HEK293 (cell line): ENCODE measurements at regions of chr7 and their contacts with region 1.

Region 1: DNA sequence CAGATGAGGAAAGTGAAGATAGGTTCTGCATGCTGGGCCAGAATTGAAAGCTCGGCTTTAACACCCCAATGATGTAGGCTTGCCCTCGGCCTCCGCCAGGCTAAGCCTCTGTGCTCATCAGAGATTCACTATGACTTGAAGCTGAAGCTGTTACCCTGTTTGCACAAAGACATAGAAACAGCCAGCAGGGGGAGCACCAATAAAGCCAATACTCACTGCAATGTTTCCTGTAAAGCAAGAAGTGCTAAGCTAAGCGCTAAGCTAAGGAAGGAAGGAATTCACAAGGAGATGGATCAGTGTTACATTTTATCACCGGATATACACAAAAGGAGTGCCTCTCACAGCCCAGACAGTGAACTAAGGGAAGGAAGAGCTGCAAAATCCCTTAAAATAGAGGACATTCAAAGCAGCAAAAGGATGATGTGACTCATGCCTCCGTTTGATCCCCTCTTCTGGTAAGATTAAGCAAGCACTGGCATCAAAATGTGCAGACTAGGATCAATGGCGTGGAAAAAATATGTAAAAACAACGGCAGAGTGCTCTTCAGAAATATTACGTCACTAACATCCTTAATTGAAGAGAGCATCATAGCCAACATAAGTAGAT is 153.8 kb downstream of the COBL start:
- H3K4me3 ChIP-seq: no peak overlapping the region
- H3K27ac ChIP-seq: no peak overlapping the region
- H3K4me1 ChIP-seq: no peaks in the 10 kb centered on the region
- CTCF ChIP-seq: peak; percentile 45; the same call in 1 of the 2 replicates

Region 2: GRCh38 chr7:50467817-50468610 is 694.8 kb before region 1 on chr7:
- CTCF ChIA-PET with region 1: interaction called, 64 read pairs
- POLR2A ChIA-PET with region 1: no interaction called
- H3K4me3 ChIP-seq: no peak overlapping the region
- H3K27ac ChIP-seq: no peak overlapping the region
- H3K4me1 ChIP-seq: peaks cover 2% of the 10 kb centered on the region; the same call in 1 of the 2 replicates
- CTCF ChIP-seq: peak; percentile 77

Region 3: DNA sequence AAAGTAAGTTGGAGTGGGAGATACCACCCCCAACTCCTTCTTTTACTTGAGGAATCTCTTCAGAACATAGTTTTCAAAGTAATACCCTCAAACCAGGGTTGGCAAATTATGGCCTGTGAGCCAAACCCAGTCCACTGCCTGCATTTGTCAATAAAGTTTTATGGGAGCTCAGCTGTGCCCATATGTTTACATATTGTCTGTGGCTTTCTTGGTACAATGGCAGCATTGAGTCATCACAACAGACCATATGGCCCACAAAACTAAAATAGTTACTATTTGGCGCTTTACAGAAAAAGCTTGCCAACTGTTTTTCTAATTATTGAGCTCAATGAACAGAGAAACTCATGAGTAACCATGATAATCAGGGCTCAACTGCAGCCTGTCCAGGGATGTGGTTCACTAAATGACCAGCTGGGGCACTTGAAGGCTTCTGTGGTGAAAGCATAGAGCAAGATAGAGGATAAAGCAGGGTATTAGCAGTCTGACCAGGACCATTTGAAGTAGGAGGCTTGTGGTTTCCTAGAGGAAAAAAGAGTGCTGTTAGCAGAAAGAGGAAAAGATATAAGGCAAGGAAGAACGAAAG is 184.1 kb before region 1 on chr7:
- CTCF ChIA-PET with region 1: no interaction called
- POLR2A ChIA-PET with region 1: no interaction called
- H3K4me3 ChIP-seq: no peak overlapping the region
- H3K27ac ChIP-seq: no peak overlapping the region
- H3K4me1 ChIP-seq: no peaks in the 10 kb centered on the region
- CTCF ChIP-seq: no peak

Region 4: GRCh38 chr7:51009704-51010496 is 152.9 kb before region 1 on chr7:
- CTCF ChIA-PET with region 1: no interaction called
- POLR2A ChIA-PET with region 1: no interaction called
- H3K4me3 ChIP-seq: no peak overlapping the region
- H3K27ac ChIP-seq: no peak overlapping the region
- H3K4me1 ChIP-seq: no peaks in the 10 kb centered on the region
- CTCF ChIP-seq: no peak

Region 5: GRCh38 chr7:51025668-51026067 is 137.2 kb before region 1 on chr7:
- CTCF ChIA-PET with region 1: no interaction called
- POLR2A ChIA-PET with region 1: no interaction called
- H3K4me3 ChIP-seq: no peak overlapping the region
- H3K27ac ChIP-seq: no peak overlapping the region
- H3K4me1 ChIP-seq: no peaks in the 10 kb centered on the region
- CTCF ChIP-seq: no peak

Region 6: GRCh38 chr7:51187941-51188340 is 25.1 kb after region 1 on chr7:
- CTCF ChIA-PET with region 1: interaction called, 15 read pairs
- POLR2A ChIA-PET with region 1: no interaction called
- H3K4me3 ChIP-seq: no peak overlapping the region
- H3K27ac ChIP-seq: no peak overlapping the region
- H3K4me1 ChIP-seq: no peaks in the 10 kb centered on the region
- CTCF ChIP-seq: peak; percentile 43; the same call in 1 of the 2 replicates

Region 7: GRCh38 chr7:51366930-51367613 is 204.2 kb after region 1 on chr7:
- CTCF ChIA-PET with region 1: interaction called, 277 read pairs
- POLR2A ChIA-PET with region 1: interaction called, 4 read pairs
- H3K4me3 ChIP-seq: no peak overlapping the region
- H3K27ac ChIP-seq: no peak overlapping the region
- H3K4me1 ChIP-seq: no peaks in the 10 kb centered on the region
- CTCF ChIP-seq: peak; percentile 62

Region 8: DNA sequence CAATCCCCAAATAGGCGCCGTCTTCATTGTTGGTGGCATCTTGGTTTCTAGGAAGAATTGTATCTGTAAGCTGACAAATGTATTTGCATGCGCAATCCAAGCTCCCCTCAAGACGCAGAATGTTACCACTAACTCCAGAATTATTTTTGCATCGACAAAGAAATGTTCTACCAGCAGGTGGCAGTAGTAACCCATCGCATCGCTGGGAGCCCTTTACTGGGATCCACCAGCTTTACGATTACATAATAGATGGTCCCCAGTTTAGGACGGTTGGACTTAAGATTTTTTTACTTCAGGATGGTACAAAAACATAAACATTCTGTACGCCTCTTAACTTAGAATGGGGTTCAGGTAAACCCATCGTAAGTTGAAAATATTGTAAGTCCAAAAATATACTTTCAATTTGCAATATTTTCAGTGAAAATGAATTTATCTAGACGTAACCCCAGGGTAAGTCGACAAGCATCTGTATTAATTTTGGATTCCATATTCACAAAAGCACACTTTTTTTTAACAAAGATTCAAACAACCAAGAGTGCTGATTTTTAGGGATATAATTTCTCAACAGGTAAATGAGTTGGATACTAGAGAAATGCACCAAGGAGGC is 267.8 kb after region 1 on chr7:
- CTCF ChIA-PET with region 1: interaction called, 15 read pairs
- POLR2A ChIA-PET with region 1: no interaction called
- H3K4me3 ChIP-seq: no peak overlapping the region
- H3K27ac ChIP-seq: no peak overlapping the region
- H3K4me1 ChIP-seq: no peaks in the 10 kb centered on the region
- CTCF ChIP-seq: peak; percentile 46

Region 9: DNA sequence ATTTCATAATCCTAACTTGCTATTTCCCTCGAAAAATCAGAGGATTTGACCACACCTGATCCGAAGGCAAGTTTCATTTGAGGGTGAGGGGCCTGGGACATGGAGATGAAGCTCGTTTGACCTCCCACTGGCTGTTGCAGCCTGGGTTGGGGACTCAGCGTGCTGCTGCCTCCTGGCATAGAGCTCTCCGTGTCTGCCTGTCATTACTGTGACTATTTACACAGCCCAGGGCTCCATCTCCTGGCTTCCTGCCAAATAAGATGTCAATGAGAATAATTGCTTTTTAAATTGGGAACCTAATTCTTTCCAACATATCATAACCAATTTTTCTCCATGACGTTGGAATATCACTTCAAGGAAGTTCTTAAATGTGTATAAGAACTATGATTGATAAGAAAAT is 293.1 kb after region 1 on chr7:
- CTCF ChIA-PET with region 1: no interaction called
- POLR2A ChIA-PET with region 1: no interaction called
- H3K4me3 ChIP-seq: no peak overlapping the region
- H3K27ac ChIP-seq: no peak overlapping the region
- H3K4me1 ChIP-seq: peaks cover 8% of the 10 kb centered on the region
- CTCF ChIP-seq: no peak